CD4-positive, alpha-beta memory T cell (primary cell): ENCODE measurements at regions of chr16 and their contacts with region 1.

Region 1: DNA sequence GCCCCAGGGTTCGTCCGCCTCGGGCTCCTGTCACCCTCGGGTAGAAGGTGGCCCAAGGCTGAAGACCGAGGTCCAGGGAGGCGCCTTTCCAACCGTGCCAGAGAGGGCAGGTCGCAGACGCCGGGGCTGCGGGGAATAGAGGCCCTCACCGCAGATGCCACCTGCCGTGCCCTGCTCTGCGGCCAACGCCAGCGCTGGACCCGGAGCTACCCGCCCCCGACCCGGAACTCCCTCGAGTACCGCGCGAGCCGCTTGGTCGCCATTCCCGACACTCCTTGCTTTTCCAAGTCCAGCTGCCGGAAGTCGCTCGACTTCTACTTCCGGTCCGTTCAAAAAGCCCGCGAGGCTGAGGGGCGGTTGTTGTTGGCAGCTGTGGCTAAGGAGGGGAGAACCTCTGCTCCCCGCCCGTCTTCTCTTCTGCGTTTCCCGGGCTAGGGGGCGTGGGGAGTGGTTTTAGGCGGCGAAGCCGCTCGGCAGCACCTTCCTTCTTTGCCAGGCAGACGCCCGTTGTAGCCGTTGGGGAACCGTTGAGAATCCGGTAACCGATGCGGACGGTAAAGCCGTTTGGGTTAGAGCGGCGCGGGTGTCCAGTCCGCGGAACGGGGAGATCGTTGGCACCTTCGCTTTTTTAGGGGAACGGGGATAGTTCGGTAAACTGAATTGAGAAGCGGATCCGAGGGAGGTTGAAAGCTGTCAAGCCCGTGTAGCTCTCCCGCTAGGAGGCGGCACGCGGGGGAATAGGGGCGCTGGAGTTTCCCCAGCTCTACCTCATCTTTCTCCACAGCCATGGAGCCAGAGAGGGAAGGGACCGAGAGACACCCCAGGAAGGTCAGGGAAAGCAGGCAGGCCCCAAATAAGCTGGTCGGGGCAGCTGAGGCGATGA is at the starts of genes ERI2 and REXO5:
- DNase-seq: peak; percentile 67 to 84 (median 70)
- H3K4me3 ChIP-seq: peak within 1 kb of the TSS; percentile 73 to 80
- H3K4me3 Mint-ChIP-seq: peak within 1 kb of the TSS; percentile 96 to 100 (median 99)
- H3K27ac ChIP-seq: peak within 1 kb of the TSS; percentile 81
- H3K27ac Mint-ChIP-seq: peak within 1 kb of the TSS; percentile 93 to 98 (median 95)
- H3K4me1 ChIP-seq: peaks cover 10% of the 10 kb centered on the region
- H3K4me1 Mint-ChIP-seq: peaks cover 3 to 27% (median 16%) of the 10 kb centered on the region in 4 donors
- H3K27me3 ChIP-seq: no peaks in the 10 kb centered on the region
- H3K27me3 Mint-ChIP-seq: no peaks in the 10 kb centered on the region
- total RNA-seq, gene ERI2: 3.7 to 4.0 TPM
- total RNA-seq, gene REXO5: 0.53 to 1.1 TPM

Region 2: GRCh38 chr16:20750558-20750957 is 55.9 kb before region 1 on chr16:
- CTCF ChIA-PET with region 1: no interaction called
- POLR2A ChIA-PET with region 1: no interaction called
- intact Hi-C with region 1: no loop called
- DNase-seq: no peak
- H3K4me3 ChIP-seq: no peak overlapping the region
- H3K4me3 Mint-ChIP-seq: no peak overlapping the region
- H3K27ac ChIP-seq: no peak overlapping the region
- H3K27ac Mint-ChIP-seq: no peak overlapping the region
- H3K4me1 ChIP-seq: no peaks in the 10 kb centered on the region
- H3K4me1 Mint-ChIP-seq: no peaks in the 10 kb centered on the region
- H3K27me3 ChIP-seq: no peaks in the 10 kb centered on the region
- H3K27me3 Mint-ChIP-seq: peaks cover 0 to 6% of the 10 kb centered on the region in 2 donors

Region 3: DNA sequence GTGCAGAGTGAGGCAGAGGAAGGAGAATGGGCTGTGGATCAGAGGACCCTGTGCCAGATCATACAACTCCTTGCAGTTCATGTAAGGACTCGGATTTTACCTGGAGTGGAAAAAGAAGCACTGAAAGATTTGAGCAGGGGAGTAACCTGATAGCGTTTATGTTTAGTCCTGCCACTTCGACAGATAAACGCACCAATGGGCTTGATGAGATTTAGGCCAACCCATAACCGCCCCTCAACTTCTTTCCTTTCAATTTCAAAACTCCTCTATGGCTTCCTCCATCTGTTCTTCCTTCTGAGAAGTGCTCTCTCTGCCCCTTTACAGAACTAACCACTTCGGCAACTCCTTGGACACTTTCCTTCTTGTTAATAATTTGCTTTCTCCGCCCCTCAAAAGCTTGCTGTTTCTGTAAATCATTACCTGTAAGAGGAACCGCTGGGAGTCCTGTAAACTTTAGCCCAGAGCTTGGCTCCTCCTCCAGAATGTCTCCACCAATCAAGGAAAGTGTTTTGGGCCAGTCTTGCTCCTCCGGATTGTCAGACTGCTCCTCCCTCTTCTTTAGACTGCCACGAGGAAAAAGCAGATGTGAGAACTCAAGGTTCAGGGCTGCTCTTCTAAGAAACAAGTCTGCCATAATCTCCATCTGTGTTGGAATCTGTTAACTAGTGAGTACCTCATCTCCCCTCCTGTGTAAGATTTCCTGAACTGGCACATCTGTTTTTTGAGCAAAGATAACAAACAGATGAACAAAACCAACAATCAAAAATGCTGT is 42.8 kb before region 1 on chr16 and contains the start of gene ACSM3:
- CTCF ChIA-PET with region 1: no interaction called
- POLR2A ChIA-PET with region 1: no interaction called
- intact Hi-C with region 1: loop called (anchors 1 kb)
- DNase-seq: peak; percentile 76 to 84 (median 80)
- H3K4me3 ChIP-seq: peak within 1 kb of the TSS; percentile 49
- H3K4me3 Mint-ChIP-seq: peak within 1 kb of the TSS; percentile 88 to 97 (median 94)
- H3K27ac ChIP-seq: peak within 1 kb of the TSS; percentile 64
- H3K27ac Mint-ChIP-seq: peak within 1 kb of the TSS; percentile 80 to 99 (median 97)
- H3K4me1 ChIP-seq: peaks cover 20% of the 10 kb centered on the region
- H3K4me1 Mint-ChIP-seq: peaks cover 12 to 34% (median 24%) of the 10 kb centered on the region in 4 donors
- H3K27me3 ChIP-seq: no peaks in the 10 kb centered on the region
- H3K27me3 Mint-ChIP-seq: no peaks in the 10 kb centered on the region
- total RNA-seq, gene ACSM3: 3.3 to 6.7 TPM

Region 4: DNA sequence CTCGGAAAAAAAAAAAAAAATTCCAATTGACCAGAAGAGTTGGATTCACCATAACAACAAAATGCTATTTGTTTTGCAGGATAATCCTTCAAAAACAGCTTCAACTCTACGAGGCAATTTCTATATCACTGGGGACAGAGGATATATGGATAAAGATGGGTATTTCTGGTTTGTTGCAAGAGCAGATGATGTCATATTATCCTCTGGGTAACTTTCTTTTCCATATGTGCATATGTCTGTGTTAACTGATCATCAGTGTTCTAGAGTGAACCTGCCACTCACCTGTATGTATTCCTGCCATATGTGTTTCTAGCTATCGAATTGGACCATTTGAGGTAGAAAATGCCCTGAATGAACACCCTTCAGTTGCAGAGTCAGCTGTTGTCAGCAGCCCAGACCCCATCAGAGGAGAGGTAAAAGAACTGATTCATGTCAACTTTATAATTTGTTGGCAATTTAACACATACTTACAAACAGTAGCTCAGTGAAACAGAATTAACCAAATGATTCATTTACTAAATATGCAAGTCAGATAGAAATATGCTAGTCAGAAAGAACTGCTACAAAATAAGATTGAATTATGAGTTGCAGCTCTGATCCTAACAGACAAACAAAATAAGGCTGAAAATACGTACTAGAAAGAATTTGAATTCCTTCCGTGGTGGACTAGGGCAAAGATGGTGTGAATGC is 14.3 kb before region 1 on chr16:
- CTCF ChIA-PET with region 1: interaction called, 15 read pairs
- POLR2A ChIA-PET with region 1: interaction called, 4 read pairs
- intact Hi-C with region 1: no loop called
- DNase-seq: no peak
- H3K4me3 ChIP-seq: no peak overlapping the region
- H3K4me3 Mint-ChIP-seq: no peak overlapping the region
- H3K27ac ChIP-seq: no peak overlapping the region
- H3K27ac Mint-ChIP-seq: no peak overlapping the region
- H3K4me1 ChIP-seq: no peaks in the 10 kb centered on the region
- H3K4me1 Mint-ChIP-seq: no peaks in the 10 kb centered on the region
- H3K27me3 ChIP-seq: no peaks in the 10 kb centered on the region
- H3K27me3 Mint-ChIP-seq: no peaks in the 10 kb centered on the region

Region 5: DNA sequence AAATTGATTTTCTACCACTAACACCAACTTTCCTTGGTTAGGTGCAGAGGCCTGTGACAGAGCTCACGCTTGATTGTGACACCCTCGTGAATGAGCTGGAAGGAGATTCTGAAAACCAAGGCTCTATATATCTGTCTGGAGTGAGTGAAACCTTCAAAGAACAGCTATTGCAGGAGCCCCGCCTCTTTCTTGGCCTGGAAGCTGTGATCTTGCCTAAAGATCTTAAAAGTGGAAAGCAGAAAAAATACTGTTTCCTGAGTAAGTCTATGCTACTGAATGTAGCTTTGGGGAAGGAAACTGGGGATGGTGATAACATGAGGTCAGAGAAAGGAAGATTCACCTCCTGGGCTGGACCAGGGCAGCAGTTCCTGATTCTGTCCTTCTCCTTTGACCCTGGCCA is 38.2 kb after region 1 on chr16:
- CTCF ChIA-PET with region 1: interaction called, 7 read pairs
- POLR2A ChIA-PET with region 1: interaction called, 3 read pairs
- intact Hi-C with region 1: loop called (anchors 2 kb)
- DNase-seq: peak in 3 of 5 donors; percentile 9 to 40 (median 17)
- H3K4me3 ChIP-seq: no peak overlapping the region
- H3K4me3 Mint-ChIP-seq: peak overlapping the region in 7 of 8 donors; percentile 12 to 80 (median 68)
- H3K27ac ChIP-seq: peak overlapping the region; percentile 22
- H3K27ac Mint-ChIP-seq: peak overlapping the region; percentile 36 to 89 (median 63)
- H3K4me1 ChIP-seq: peaks cover 25% of the 10 kb centered on the region
- H3K4me1 Mint-ChIP-seq: peaks cover 15 to 27% (median 19%) of the 10 kb centered on the region in 4 donors
- H3K27me3 ChIP-seq: no peaks in the 10 kb centered on the region
- H3K27me3 Mint-ChIP-seq: no peaks in the 10 kb centered on the region

Region 6: DNA sequence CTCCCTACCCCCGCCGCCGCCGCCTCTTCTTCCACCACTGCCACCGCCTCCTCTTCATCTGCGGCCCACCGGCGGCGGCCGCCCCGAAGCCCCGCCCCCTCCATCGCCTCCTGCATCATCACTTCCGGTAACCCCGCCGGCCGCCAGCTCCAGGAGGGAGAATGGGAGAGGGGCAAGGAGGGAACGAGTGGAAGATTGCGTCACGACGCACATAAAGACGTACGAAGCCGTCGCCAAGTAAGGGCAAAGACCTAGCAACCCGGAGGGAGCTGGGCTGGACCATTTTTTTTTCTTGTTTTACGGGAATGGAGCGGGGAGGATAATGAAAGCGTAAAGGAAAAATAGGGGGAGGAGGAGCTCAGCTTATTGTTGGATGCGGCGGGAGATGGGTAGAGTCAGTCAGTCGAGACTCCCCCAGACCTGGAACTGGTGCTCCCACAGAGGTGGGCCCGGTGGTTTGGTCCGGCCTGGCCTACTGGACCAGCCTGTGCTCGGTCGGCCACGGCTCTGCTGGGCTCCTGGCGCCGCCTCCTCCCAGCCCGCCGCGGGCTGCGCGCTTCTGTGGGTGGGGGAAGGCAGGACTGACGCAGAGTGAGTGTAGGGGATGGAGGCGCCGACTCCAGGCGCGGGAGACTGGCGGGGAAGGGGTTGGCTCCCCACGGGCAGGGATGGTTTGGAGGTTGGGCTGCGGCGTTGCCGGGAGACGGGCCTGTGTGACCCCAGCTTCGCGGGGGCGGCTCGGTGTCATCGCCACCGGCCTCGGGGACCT is 94.1 kb after region 1 on chr16 and contains the starts of genes DCUN1D3 and LYRM1:
- CTCF ChIA-PET with region 1: no interaction called
- POLR2A ChIA-PET with region 1: interaction called, 8 read pairs
- intact Hi-C with region 1: loop called (anchors 10 kb)
- DNase-seq: peak; percentile 81 to 92 (median 85)
- H3K4me3 ChIP-seq: peak within 1 kb of the TSS; percentile 70 to 91
- H3K4me3 Mint-ChIP-seq: peak within 1 kb of the TSS; percentile 93 to 99 (median 94)
- H3K27ac ChIP-seq: peak within 1 kb of the TSS; percentile 88
- H3K27ac Mint-ChIP-seq: peak within 1 kb of the TSS; percentile 94 to 99 (median 97)
- H3K4me1 ChIP-seq: peaks cover 57% of the 10 kb centered on the region
- H3K4me1 Mint-ChIP-seq: peaks cover 48 to 76% (median 60%) of the 10 kb centered on the region in 4 donors
- H3K27me3 ChIP-seq: no peaks in the 10 kb centered on the region
- H3K27me3 Mint-ChIP-seq: no peaks in the 10 kb centered on the region
- total RNA-seq, gene DCUN1D3: 6.2 to 7.5 TPM
- total RNA-seq, gene LYRM1: 25.8 to 27.4 TPM